GM12878 (cell line): ENCODE measurements at regions of chr4 and their contacts with region 1.

Region 1: GRCh38 chr4:23130845-23131244 is 438.1 kb downstream of the GBA3 start:
- DNase-seq: no peak
- ATAC-seq: peak; percentile 68
- H3K4me3 ChIP-seq: no peak overlapping the region
- H3K27ac ChIP-seq: no peak overlapping the region
- H3K4me1 ChIP-seq: no peaks in the 10 kb centered on the region
- H3K27me3 ChIP-seq: no peaks in the 10 kb centered on the region
- CTCF ChIP-seq: 0 out of 6 replicates have a peak, but pooled peaks of 1 of the 3 experiments have one; percentile 5
- EP300 ChIP-seq: no peak
- POLR2A ChIP-seq: no peak
- RAD21 ChIP-seq: no peak

Region 2: GRCh38 chr4:23114538-23114937 is 16.3 kb before region 1 on chr4:
- CTCF ChIA-PET with region 1: interaction called, 16 read pairs
- POLR2A ChIA-PET with region 1: no interaction called
- RAD21 ChIA-PET with region 1: interaction called, 9 read pairs
- SMC1A ChIA-PET with region 1: interaction called, 38 read pairs
- in situ Hi-C with region 1: no loop called
- intact Hi-C with region 1: no loop called
- DNase-seq: no peak
- ATAC-seq: peak; percentile 78
- H3K4me3 ChIP-seq: no peak overlapping the region
- H3K27ac ChIP-seq: no peak overlapping the region
- H3K4me1 ChIP-seq: no peaks in the 10 kb centered on the region
- H3K27me3 ChIP-seq: no peaks in the 10 kb centered on the region
- CTCF ChIP-seq: no peak
- EP300 ChIP-seq: no peak
- POLR2A ChIP-seq: no peak
- RAD21 ChIP-seq: no peak

Region 3: DNA sequence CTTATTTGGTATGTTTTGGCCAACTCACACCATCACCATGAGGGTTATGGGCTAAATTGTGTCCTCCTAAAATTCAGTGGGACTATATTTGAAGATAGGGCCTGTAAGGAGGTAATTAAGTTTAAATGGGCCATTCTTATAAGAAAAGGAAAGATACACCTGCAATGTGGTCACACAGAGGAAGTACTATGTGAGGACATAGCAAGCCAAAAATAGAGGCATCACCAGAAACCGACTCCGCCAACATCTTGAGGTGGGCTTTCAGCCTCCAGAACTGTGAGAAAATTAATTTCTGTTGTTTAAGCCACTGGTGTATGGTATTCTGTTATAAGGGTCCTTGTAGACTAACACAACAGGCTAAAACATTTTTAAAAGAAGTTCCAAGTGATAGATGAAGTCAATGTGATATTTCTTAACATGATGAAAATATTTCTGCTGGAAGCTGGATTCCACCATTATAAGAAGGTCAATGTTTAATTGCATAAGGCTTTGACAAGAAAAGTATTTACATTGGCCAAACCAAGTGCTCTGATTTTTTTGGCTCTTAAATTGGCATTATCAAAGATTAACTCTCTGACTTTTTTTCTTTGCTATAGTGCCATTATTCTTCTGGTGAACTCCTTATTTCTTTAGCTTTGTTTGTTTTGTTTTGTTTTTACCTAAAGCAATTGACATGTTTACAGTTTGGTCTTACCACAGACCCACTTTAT is 218.1 kb after region 1 on chr4:
- CTCF ChIA-PET with region 1: no interaction called
- POLR2A ChIA-PET with region 1: no interaction called
- RAD21 ChIA-PET with region 1: no interaction called
- SMC1A ChIA-PET with region 1: no interaction called
- in situ Hi-C with region 1: no loop called
- intact Hi-C with region 1: no loop called
- DNase-seq: no peak
- ATAC-seq: peak; percentile 71
- H3K4me3 ChIP-seq: no peak overlapping the region
- H3K27ac ChIP-seq: no peak overlapping the region
- H3K4me1 ChIP-seq: no peaks in the 10 kb centered on the region
- H3K27me3 ChIP-seq: no peaks in the 10 kb centered on the region
- CTCF ChIP-seq: no peak
- EP300 ChIP-seq: no peak
- POLR2A ChIP-seq: no peak
- RAD21 ChIP-seq: no peak